Activated CD4-positive, alpha-beta T cell treated with anti-CD3 and anti-CD28 coated beads for 36 hours (primary cell): ENCODE measurements at regions of chr4 and their contacts with region 1.

Region 1: GRCh38 chr4:139266583-139267257 is 13.3 kb downstream of the MGARP start:
- DNase-seq: peak; percentile 92
- ATAC-seq: peak; percentile 97
- H3K4me3 Mint-ChIP-seq: peak overlapping the region; percentile 25
- H3K27ac Mint-ChIP-seq: peak overlapping the region; percentile 81
- H3K4me1 Mint-ChIP-seq: peaks cover 27% of the 10 kb centered on the region
- H3K27me3 Mint-ChIP-seq: no peaks in the 10 kb centered on the region

Region 2: GRCh38 chr4:138242076-138242833 is 1024.5 kb before region 1 on chr4 and contains the start of gene SLC7A11:
- CTCF ChIA-PET with region 1: no interaction called
- POLR2A ChIA-PET with region 1: no interaction called
- intact Hi-C with region 1: loop called in 1 of 2 experiments (anchors 2 kb)
- DNase-seq: peak; percentile 75
- ATAC-seq: peak; percentile 95
- H3K4me3 Mint-ChIP-seq: peak within 1 kb of the TSS; percentile 78
- H3K27ac Mint-ChIP-seq: peak within 1 kb of the TSS; percentile 88
- H3K4me1 Mint-ChIP-seq: peaks cover 7% of the 10 kb centered on the region
- H3K27me3 Mint-ChIP-seq: no peaks in the 10 kb centered on the region
- total RNA-seq, gene SLC7A11: 4.4 to 4.9 TPM

Region 3: GRCh38 chr4:139083956-139084803 is 182.5 kb before region 1 on chr4:
- CTCF ChIA-PET with region 1: no interaction called
- POLR2A ChIA-PET with region 1: no interaction called
- intact Hi-C with region 1: loop called in 1 of 2 experiments (anchors 1 kb)
- DNase-seq: peak; percentile 92
- ATAC-seq: peak; percentile 64
- H3K4me3 Mint-ChIP-seq: peak overlapping the region; percentile 100
- H3K27ac Mint-ChIP-seq: peak overlapping the region; percentile 99
- H3K4me1 Mint-ChIP-seq: peaks cover 30% of the 10 kb centered on the region
- H3K27me3 Mint-ChIP-seq: no peaks in the 10 kb centered on the region

Region 4: GRCh38 chr4:139229534-139230039 is 37.1 kb before region 1 on chr4:
- CTCF ChIA-PET with region 1: no interaction called
- POLR2A ChIA-PET with region 1: no interaction called
- intact Hi-C with region 1: loop called in 1 of 2 experiments (anchors 2 kb)
- DNase-seq: no peak
- ATAC-seq: peak; percentile 66
- H3K4me3 Mint-ChIP-seq: no peak overlapping the region
- H3K27ac Mint-ChIP-seq: no peak overlapping the region
- H3K4me1 Mint-ChIP-seq: peaks cover 1% of the 10 kb centered on the region
- H3K27me3 Mint-ChIP-seq: no peaks in the 10 kb centered on the region

Region 5: GRCh38 chr4:139243448-139244365 is 23.0 kb before region 1 on chr4:
- CTCF ChIA-PET with region 1: no interaction called
- POLR2A ChIA-PET with region 1: no interaction called
- intact Hi-C with region 1: no loop called
- DNase-seq: no peak
- ATAC-seq: no peak
- H3K4me3 Mint-ChIP-seq: no peak overlapping the region
- H3K27ac Mint-ChIP-seq: no peak overlapping the region
- H3K4me1 Mint-ChIP-seq: no peaks in the 10 kb centered on the region
- H3K27me3 Mint-ChIP-seq: no peaks in the 10 kb centered on the region

Region 6: DNA sequence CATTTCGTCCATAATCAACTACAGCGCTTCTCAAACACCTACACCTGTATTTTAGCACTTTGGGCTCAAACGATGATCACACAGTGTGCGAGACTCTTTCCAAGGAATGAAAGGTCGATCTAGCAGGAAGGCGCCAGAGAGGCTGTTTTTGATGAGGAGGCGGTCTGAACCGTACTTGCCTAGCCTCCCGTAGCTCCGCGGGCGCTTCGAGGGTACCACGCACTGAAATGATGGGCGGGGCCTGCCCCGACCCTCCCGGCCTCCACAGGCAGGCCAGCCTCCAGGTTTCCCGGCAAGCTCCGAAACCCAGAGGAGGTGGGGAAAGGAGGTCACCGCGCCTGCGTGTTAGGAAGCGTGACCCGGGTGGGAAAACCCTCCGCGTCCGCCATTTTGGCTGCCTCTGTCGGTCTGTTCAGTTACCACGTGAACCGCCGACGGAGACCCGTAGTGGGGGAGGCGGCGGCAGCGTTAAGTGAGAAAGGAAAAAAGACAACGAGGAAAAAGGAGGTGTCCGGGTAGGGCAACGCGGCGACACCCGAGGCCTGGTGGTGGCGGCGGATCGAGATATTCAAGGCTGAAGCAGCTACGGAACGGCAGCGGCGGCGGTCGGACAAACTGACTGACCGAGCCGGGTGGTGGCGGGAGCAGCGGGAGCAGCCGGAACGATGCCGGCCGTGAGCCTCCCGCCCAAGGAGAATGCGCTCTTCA is 34.5 kb after region 1 on chr4 and contains the start of gene NAA15:
- CTCF ChIA-PET with region 1: interaction called, 10 read pairs
- POLR2A ChIA-PET with region 1: interaction called, 12 read pairs
- intact Hi-C with region 1: loop called (anchors 1 kb)
- DNase-seq: peak; percentile 99
- ATAC-seq: peak; percentile 89
- H3K4me3 Mint-ChIP-seq: peak within 1 kb of the TSS; percentile 98
- H3K27ac Mint-ChIP-seq: peak within 1 kb of the TSS; percentile 96
- H3K4me1 Mint-ChIP-seq: peaks cover 61% of the 10 kb centered on the region
- H3K27me3 Mint-ChIP-seq: no peaks in the 10 kb centered on the region
- total RNA-seq, gene NAA15: 64.3 to 113 TPM

Region 7: DNA sequence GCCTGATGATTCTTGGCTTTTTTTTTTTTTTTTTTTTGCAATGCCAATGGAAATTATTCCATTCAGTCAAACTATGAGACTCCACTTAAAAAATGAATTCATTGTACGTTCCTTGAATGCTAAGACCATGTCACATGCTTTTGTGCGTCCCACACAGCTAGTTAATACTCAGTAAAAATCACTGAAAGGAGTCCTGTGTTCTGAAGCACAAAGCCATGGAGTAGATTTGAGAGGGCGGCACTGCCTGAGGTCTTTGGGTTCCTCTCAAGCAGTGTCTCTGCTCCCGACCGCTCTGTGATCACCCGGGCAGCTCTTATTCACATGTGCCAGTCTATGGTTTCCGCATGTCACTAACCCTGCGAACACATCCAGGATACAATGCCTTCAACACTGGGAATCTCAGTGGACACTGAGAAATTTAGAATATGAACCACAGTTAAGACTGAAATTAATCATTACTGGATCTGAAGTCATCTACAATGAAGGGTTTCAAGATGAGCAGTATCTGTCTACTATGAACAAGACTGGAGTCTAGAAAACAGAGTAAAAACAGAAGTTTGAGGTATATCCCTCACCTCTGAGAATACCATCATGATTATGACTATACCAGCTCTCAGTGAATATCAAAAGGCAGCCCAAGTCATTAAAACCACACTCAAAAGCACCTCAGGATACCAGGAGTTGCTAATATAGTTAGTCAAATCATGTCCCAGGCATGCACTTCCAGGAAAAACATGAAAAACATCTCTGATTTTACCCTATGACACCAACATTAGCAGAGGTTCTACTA is 591.9 kb after region 1 on chr4:
- CTCF ChIA-PET with region 1: no interaction called
- POLR2A ChIA-PET with region 1: no interaction called
- intact Hi-C with region 1: loop called in 1 of 2 experiments (anchors 10 kb)
- DNase-seq: peak; percentile 55
- ATAC-seq: peak; percentile 94
- H3K4me3 Mint-ChIP-seq: no peak overlapping the region
- H3K27ac Mint-ChIP-seq: no peak overlapping the region
- H3K4me1 Mint-ChIP-seq: peaks cover 32% of the 10 kb centered on the region
- H3K27me3 Mint-ChIP-seq: peaks cover 33% of the 10 kb centered on the region